CD4-positive, alpha-beta memory T cell (primary cell): ENCODE measurements at regions of chr16 and their contacts with region 1.

Region 1: DNA sequence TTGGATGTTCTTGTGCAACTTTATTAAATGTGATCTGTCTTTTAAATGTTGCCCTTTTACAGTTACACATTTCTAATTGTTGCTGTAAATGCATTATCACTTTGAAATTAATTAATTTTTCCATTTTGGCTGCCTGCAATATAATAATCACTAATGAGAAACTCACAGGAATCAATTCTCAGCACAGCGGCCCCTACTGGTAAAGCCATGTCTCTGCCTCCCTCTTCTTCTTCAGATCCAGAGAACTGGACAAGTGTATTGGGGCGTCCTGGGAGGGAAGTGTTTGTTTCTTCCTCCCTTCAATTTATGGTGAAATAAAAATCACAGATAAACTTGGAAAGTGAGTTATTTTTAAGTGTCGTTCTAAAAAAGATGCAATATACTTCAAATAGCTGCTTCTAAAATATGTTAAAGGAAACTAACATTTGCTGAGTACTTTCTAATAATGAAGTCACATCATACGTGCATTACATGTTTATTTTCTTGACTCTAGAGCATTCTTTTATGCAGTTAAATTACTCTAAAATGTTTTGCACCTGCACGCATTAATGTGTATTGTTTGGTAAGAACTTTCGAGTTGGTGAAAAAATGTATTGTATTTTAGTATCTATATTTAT is 338.0 kb downstream of the WWOX start:
- DNase-seq: peak in 4 of 5 donors; percentile 7 to 24 (median 14)
- H3K4me3 ChIP-seq: no peak overlapping the region
- H3K4me3 Mint-ChIP-seq: no peak overlapping the region
- H3K27ac ChIP-seq: no peak overlapping the region
- H3K27ac Mint-ChIP-seq: no peak overlapping the region
- H3K4me1 ChIP-seq: no peaks in the 10 kb centered on the region
- H3K4me1 Mint-ChIP-seq: peaks cover 0 to 3% (median under 1%) of the 10 kb centered on the region in 4 donors
- H3K27me3 ChIP-seq: no peaks in the 10 kb centered on the region
- H3K27me3 Mint-ChIP-seq: no peaks in the 10 kb centered on the region

Region 2: DNA sequence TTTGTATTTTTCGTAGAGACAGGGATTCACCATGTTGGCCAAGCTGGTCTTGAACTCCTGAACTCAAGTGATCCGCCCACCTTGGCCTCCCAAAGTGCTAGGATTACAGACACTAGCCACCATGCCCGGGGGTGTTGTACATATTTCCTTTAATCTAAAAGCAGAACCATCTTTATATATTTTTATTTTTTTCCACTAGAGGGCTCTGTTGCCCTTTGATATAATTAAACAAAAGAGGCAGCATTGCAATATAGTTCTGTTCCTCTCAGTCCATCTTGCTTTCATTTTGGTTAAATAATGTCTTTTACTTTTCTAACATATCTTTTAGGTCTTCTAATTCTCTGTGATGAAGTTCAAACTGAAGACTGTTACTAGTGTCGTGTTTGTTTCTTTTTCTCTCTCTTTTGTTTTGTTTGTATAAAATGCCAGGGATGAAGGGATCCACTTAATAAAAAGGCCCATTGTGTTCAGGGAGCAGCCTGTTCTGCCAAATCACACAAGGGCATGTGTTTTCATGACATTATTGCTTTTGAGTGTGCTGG is 314.6 kb before region 1 on chr16:
- CTCF ChIA-PET with region 1: no interaction called
- POLR2A ChIA-PET with region 1: no interaction called
- intact Hi-C with region 1: loop called (anchors 5 kb)
- DNase-seq: peak in 4 of 5 donors; percentile 54 to 63 (median 58)
- H3K4me3 ChIP-seq: no peak overlapping the region
- H3K4me3 Mint-ChIP-seq: peak overlapping the region in 3 of 8 donors; percentile 32 to 53 (median 49)
- H3K27ac ChIP-seq: no peak overlapping the region
- H3K27ac Mint-ChIP-seq: peak overlapping the region in 5 of 7 donors; percentile 14 to 73 (median 62)
- H3K4me1 ChIP-seq: no peaks in the 10 kb centered on the region
- H3K4me1 Mint-ChIP-seq: peaks cover 2 to 11% (median 4%) of the 10 kb centered on the region in 4 donors
- H3K27me3 ChIP-seq: no peaks in the 10 kb centered on the region
- H3K27me3 Mint-ChIP-seq: no peaks in the 10 kb centered on the region

Region 3: DNA sequence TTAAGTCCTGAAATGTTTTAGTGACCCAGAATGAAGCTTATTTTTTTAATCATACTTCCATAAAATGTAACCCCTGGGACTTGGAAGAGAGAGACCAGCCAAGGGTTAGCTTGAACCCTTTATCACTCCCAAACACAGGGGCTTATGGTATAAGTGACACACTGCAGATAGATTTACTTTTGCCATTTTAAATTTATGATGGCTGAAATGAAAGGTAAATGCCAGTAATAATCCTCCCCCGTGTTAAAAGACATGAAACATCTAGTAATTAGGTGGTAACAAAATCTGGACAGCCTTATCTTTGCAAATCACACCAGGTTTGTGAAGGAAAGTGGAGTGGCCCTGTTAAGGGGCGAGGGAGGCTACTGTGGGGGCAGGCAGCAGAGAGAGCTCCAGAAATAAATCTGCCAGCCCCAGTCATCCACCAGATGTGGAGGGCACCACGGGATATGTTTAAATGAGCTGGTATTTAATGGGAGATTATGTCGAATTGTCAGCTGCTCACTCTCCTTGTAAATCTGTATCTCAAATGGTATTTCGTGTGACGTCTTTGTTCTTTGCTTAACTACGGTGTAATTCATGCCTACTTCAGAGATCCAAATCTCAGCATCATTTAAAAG is 11.5 kb before region 1 on chr16:
- CTCF ChIA-PET with region 1: interaction called, 18 read pairs
- POLR2A ChIA-PET with region 1: no interaction called
- intact Hi-C with region 1: no loop called
- DNase-seq: no peak
- H3K4me3 ChIP-seq: no peak overlapping the region
- H3K4me3 Mint-ChIP-seq: no peak overlapping the region
- H3K27ac ChIP-seq: no peak overlapping the region
- H3K27ac Mint-ChIP-seq: no peak overlapping the region
- H3K4me1 ChIP-seq: no peaks in the 10 kb centered on the region
- H3K4me1 Mint-ChIP-seq: peaks cover 0 to 5% (median 2%) of the 10 kb centered on the region in 4 donors
- H3K27me3 ChIP-seq: no peaks in the 10 kb centered on the region
- H3K27me3 Mint-ChIP-seq: no peaks in the 10 kb centered on the region